ENCODE measurements at regions of chr18 and their contacts with region 1.

Region 1: GRCh38 chr18:48868468-48869466 is 82.0 kb downstream of the SMAD7 start:
- DNase-seq: no peak
- H3K4me3 ChIP-seq: no peak overlapping the region
- H3K27ac ChIP-seq: no peak overlapping the region
- H3K27me3 ChIP-seq: no peaks in the 10 kb centered on the region
- CTCF ChIP-seq: no peak

Region 2: DNA sequence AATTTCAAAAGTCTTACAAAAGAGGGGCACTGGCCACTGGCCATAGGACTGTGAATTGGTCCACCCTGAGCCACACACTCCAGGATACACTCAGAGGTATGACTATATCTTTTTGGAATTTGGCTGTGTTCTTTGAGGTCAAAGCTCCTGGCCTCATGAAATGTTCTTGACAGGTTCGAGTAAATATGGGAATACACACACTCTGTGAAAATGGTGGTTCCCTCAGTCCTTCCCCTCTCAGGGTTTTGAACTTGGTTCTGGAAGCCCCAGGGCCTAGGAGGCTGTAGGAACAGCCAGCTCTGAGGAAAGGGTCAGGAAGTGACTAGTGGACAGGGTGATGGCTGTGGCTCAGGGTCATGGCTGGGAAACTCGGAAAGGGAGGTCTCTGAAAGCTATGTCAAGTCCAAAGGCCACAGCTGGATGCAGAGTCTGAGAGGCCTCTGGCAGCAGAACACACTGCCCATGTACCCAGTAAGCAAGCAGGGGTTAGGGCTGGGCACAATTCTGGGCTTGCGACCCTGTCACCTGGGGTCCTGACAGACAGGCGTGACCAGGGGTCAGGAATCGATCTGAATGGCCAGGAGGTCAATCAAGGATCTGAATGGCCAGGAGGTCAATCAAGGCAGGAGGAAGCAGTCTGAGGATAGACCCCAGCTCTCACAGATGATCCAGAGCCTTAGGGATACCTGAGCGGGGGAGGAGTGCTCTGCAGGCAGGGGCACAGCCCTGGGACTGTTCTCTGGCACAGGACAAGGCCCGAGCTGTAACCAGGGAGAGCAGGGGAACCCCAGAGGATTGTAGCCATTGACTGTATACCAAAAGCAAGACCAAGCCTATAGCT is 714.9 kb before region 1 on chr18:
- intact Hi-C with region 1: no loop called
- DNase-seq: no peak
- H3K4me3 ChIP-seq: no peak overlapping the region
- H3K27ac ChIP-seq: no peak overlapping the region
- H3K27me3 ChIP-seq: no peaks in the 10 kb centered on the region
- CTCF ChIP-seq: no peak

Region 3: DNA sequence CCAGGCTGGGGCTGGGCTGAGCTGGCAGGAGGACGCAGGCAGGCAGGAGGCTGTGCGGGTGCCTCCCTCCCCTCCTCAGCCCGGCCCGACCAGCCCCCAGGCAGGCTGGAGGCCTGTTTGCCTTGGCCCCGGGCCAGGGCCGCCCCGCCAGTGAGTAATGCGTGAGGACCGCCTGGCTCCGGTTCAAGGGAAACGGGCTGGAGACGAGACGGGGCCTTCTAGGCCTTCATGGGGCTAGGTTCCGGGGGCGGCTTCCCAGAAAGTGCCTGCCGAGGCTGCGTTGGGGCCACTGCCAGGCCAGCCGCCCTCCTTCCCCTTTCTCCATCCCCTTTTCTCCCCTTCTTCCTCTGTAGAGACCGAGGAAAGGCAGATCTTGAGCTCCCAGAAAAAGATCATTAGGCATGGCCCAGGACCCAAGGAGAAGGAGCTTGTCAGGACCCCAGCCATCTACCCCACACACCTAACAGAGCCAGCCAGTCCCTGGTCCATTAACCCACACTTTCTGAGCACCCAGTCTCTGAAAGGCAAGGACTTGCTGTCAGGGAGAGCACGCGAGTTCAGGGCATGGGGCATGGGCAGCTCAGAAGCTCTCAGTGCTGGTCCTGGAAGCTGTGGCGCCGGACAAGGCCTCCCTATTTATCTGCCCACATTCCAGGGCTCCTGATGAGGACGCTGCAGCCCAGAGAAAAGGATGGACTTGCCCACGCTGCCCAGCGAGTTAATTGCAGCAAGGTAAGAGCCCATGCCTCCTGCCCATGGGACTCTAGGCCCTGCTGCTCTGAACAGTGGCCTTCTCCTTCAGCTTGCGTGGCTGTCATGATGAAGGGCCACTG is 33.5 kb after region 1 on chr18:
- intact Hi-C with region 1: loop called in 1 of 2 experiments (anchors 5 kb)
- DNase-seq: peak in 6 of 10 donors; percentile 49 to 68 (median 62)
- H3K4me3 ChIP-seq: peak overlapping the region in 4 of 59 donors; percentile 2 to 18 (median 10)
- H3K27ac ChIP-seq: peak overlapping the region in 48 of 59 donors; percentile 3 to 84 (median 60)
- H3K27me3 ChIP-seq: no peaks in the 10 kb centered on the region
- CTCF ChIP-seq: no peak

Region 4: GRCh38 chr18:49041435-49042245 is 172.9 kb after region 1 on chr18:
- intact Hi-C with region 1: loop called in 1 of 2 experiments (anchors 5 kb)
- DNase-seq: peak in 2 of 10 donors; percentile 23 to 58
- H3K4me3 ChIP-seq: no peak overlapping the region
- H3K27ac ChIP-seq: no peak overlapping the region
- H3K27me3 ChIP-seq: no peaks in the 10 kb centered on the region
- CTCF ChIP-seq: peak in 49 of 56 donors; percentile 27 to 66 (median 43)